Breast epithelium (tissue), 4 donors: ENCODE measurements at regions of chr3 and their contacts with region 1.

Region 1: DNA sequence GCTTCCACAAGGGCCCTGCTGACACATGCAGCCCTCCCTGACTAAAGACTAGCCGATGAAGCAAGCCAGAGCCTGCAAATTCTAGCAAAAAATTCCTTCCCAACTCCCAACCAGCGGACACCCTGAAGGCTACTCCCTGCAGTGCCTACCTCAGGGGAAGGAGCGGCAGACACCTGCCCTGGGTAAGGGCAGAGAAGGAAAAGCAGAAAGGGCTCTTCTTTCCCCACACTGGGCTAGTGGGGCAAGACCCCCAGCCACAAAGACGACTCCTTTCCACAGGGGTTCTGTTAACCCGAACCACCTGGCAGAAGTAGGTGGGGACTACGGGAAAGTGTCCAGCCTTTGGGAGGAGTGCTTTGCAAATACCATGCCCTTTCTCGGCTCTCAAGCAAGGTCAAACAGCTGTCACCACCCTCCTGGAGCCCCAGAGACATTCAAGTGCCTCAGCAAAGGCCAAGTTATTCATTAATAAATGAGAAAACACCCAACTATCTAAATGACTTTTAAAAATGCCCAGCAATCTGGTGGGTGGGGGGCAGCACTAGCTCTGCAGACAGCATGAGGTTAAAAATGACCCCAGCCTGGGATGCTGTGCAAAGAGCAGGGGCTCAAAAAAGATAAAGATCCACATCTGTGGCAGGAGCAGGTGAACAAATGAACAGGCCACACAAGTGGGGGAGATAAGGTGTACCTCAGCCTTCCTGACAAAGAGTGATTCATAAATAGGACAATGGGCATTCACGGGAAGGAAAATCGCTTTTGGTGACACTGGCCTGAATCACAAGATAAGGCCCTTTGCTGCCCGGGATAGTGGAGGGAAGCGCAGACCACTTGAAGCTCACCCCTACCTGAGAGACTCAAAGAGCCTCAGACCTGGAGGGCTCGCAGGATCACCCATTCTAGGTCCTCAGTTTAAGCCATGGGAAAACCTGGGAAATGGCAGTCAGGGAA is 33.0 kb downstream of the CCDC12 start:
- DNase-seq: no peak
- H3K4me3 ChIP-seq: no peak overlapping the region
- H3K27ac ChIP-seq: peak overlapping the region; percentile 56 to 64
- H3K4me1 ChIP-seq: peaks cover 0 to 23% of the 10 kb centered on the region in 2 donors
- H3K27me3 ChIP-seq: no peaks in the 10 kb centered on the region
- CTCF ChIP-seq: no peak
- POLR2A ChIP-seq: no peak

Region 2: GRCh38 chr3:46966811-46967210 is 23.3 kb after region 1 on chr3:
- intact Hi-C with region 1: loop called (anchors 2 kb)
- DNase-seq: no peak
- H3K4me3 ChIP-seq: no peak overlapping the region
- H3K27ac ChIP-seq: peak overlapping the region; percentile 48 to 50
- H3K4me1 ChIP-seq: peaks cover 8 to 28% of the 10 kb centered on the region in 2 donors
- H3K27me3 ChIP-seq: no peaks in the 10 kb centered on the region
- CTCF ChIP-seq: no peak
- POLR2A ChIP-seq: no peak

Region 3: DNA sequence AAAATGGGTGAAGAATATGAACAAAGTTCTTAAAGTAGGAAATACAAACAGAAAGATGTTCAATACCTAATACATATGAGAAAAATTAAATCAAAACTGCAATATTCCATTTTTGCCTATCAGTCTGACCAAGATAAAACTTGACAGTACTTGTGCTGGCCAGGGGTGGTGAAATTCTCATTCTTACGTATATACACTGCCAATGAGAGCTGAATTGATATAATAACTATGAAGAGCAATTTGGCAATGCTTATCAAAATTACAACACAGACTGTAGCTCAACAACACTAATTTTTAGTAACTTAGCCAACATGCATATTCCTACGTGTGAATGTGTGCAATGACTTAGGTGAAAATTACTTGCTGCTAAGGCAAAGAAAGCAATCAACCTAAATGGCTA is 130.2 kb after region 1 on chr3:
- intact Hi-C with region 1: no loop called
- DNase-seq: no peak
- H3K4me3 ChIP-seq: no peak overlapping the region
- H3K27ac ChIP-seq: no peak overlapping the region
- H3K4me1 ChIP-seq: no peaks in the 10 kb centered on the region
- H3K27me3 ChIP-seq: no peaks in the 10 kb centered on the region
- CTCF ChIP-seq: no peak
- POLR2A ChIP-seq: no peak